IMR-90 (cell line): ENCODE measurements at regions of chr10 and their contacts with region 1.

Region 1: DNA sequence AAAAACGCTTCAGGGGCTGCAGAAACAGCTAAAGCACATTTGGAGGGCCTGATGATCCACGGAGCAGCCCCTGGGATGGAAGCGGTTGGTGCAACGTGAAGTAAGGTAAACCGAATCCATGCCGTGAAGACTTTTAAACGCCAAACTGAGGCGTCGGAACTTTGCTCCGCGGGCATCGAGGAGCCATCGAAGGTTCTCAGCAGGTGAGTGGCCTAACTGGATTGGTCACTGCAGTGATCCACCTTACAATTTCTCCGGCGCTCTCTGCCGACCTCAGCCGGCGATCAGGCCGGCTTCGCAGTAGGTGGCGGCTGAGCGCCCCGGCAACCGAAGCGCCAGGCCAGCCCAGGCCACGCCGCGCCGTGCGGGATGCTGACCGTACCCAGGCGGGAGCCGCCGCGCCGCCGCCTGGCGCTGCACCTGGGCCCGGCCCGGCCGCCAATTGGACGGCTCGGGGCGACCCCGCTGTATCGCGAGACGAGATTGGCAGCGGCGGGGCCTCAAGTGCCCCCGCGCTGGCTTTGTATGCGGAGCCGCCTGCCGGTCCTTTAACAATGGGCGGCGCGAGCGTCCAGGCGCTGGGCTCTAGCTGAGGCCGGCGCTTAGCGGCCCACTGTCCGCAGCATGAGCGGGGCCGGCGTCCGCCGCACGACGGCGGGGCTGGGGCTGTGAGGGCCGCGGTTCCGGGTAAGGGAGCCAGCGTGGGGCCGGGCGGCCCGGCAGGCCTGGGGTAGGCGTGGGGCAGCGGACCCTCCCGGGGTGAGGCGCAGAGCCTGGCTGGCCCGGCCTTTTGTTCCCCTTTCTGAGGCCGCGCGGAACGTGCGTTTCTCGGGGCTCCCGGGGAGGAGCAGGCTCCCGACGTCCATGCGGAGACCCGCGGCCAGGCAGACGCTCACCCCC is at the start of gene CCNJ:
- DNase-seq: peak; percentile 87
- ATAC-seq: peak; percentile 92
- H3K4me3 ChIP-seq: peak within 1 kb of the TSS; percentile 87
- H3K27ac ChIP-seq: peak within 1 kb of the TSS; percentile 86
- H3K4me1 ChIP-seq: no peaks in the 10 kb centered on the region; the same call in 1 of the 2 replicates
- H3K27me3 ChIP-seq: no peaks in the 10 kb centered on the region
- CTCF ChIP-seq: 0 out of 2 replicates have a peak, but pooled peaks have one; percentile 11
- POLR2A ChIP-seq: peak; percentile 89
- RAD21 ChIP-seq: no peak
- total RNA-seq, gene CCNJ: 10.0 and 10.3 TPM in 2 replicates

Region 2: DNA sequence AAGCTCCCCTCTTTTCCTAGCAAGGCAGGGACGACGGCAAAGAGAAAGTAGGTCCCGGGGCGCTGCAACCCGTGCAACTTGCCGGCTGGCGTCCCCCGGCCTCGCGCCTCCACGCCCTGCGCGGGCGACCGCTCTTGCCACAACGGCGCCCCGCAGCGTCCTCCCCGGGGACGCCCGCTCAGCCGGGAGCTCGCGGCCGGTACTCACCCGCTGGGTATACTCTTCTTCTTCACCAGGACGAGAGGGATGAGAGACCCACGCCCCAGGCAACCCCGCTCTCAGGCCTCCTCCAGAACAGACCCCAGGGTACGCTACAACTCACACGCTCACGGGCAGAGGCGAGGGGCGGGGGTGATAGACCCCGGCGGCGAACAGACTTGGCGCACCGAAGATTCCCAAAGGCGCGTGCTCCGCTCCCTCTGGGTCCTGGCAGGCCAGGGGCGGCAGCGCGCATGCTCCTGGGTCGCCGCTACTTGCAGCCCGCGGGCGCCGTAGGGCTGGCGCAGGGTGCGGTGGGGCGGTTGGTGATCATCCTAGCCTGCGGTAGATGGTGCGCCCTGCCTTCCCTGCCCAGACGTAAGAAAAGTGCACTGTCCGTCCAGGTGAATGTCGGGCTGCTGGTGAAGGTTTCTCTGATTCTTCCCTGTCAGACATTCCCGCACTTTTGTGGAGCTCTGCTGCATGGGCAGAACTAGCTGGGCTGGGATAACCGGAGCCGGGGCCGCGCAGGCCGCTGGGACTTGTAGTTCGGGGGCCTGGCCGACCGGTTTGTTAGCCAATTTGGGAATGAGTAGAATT is 135.6 kb before region 1 on chr10 and contains the start of gene CC2D2B:
- CTCF ChIA-PET with region 1: interaction called, 4 read pairs
- POLR2A ChIA-PET with region 1: no interaction called
- dilution Hi-C with region 1: no loop called
- in situ Hi-C with region 1: no loop called
- intact Hi-C with region 1: loop called (anchors 1 kb)
- DNase-seq: peak; percentile 74
- ATAC-seq: peak; percentile 96
- H3K4me3 ChIP-seq: peak within 1 kb of the TSS; percentile 85
- H3K27ac ChIP-seq: peak within 1 kb of the TSS; percentile 79
- H3K4me1 ChIP-seq: no peaks in the 10 kb centered on the region
- H3K27me3 ChIP-seq: no peaks in the 10 kb centered on the region
- CTCF ChIP-seq: peak; percentile 23; the same call in 1 of the 2 replicates
- POLR2A ChIP-seq: no peak
- RAD21 ChIP-seq: no peak
- total RNA-seq, gene CC2D2B: not detected in 2 replicates

Region 3: DNA sequence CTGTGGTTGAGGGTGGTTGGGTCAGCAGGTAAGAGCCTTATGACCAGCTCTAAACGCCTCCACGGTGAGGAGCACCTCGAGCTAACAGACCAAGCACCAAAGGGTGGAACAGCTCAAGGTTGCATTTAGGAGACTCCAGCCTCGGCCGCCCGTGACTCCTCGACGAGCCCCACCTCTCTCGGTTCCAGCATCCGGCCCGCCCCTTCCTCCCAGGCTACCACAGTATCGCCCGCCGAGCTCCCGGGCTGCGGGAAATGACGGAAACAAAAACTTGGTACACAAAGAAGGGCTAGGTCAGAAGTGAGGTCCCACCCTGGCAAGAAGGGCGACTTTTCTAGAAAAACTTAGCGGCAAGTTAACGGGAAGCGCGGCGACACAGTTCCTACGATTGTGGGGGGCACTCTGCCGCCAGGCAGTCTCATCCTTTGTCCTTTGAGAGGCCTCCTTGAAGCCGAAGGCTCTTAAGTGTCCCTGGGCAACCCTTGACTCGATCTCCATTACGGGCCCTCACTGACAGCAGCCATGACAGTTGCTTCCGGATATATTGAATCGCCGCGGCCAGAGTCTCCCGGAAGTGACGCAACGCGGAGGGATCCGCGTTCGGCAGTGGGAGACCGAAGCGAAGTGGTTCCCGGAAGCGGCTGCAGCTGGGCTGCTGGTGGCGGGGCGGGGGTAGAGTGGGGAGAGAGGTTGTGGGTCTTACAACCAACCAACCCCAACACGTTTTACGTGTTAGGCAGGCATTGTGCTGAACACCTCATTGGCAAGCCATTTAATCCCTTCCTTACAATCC is 46.6 kb after region 1 on chr10:
- CTCF ChIA-PET with region 1: no interaction called
- POLR2A ChIA-PET with region 1: no interaction called
- dilution Hi-C with region 1: no loop called
- in situ Hi-C with region 1: no loop called
- intact Hi-C with region 1: loop called (anchors 2 kb)
- DNase-seq: peak; percentile 96
- ATAC-seq: peak; percentile 98
- H3K4me3 ChIP-seq: peak overlapping the region; percentile 80
- H3K27ac ChIP-seq: peak overlapping the region; percentile 82
- H3K4me1 ChIP-seq: peaks cover 3% of the 10 kb centered on the region
- H3K27me3 ChIP-seq: no peaks in the 10 kb centered on the region; the same call in 1 of the 2 replicates
- CTCF ChIP-seq: no peak
- POLR2A ChIP-seq: peak; percentile 79
- RAD21 ChIP-seq: no peak; the same call in 1 of the 2 replicates

Region 4: DNA sequence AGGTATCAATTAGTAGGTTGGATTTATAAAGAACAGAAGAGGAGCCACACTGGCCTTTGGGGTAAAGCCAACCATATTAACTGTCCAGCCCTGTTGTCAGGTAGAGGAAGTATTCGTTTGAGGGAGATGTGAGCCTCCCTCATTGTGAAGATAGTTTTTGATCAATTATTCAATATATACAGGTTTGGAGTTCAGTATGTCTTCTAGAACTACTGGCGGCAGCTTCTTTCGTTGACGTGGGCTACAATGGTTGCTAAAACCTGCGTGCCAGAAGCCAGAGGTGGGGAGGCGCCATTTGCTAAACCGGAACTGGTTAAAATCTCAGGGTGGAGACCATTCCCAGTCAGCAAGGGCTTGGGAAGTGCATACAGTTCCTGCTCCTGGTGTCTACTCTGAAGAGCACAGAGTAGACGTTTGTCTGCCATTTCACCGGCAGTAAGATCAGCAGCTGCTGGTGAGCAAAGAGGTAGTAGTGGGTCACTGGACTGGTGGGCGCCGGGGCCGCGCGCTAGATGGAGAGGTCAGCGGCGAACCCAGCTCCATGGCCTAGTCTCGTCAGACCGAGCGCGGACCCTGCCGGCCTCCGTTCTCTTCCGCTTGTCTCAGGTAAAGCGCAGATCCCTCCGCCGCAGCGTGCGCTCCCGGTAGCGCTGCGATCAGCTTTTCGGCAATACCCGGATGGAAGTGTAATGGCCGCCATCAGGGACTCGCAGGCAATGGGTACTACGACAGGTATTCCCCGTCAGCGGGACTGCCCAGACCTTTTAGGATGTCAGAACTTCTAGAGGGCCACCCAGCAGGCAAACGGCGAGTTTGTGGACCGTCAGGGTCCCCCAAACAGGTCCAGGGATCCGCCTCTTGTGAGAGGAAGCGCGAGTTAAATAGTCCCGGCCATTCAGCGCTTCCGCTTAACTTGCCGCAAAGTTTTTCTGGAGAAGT is 86.4 kb after region 1 on chr10 and contains the start of gene ZNF518A:
- CTCF ChIA-PET with region 1: no interaction called
- POLR2A ChIA-PET with region 1: no interaction called
- dilution Hi-C with region 1: no loop called
- in situ Hi-C with region 1: loop called (anchors 5 kb)
- intact Hi-C with region 1: loop called (anchors 1 kb)
- DNase-seq: peak; percentile 97
- ATAC-seq: peak; percentile 85
- H3K4me3 ChIP-seq: peak within 1 kb of the TSS; percentile 54
- H3K27ac ChIP-seq: peak within 1 kb of the TSS; percentile 94
- H3K4me1 ChIP-seq: peaks cover under 1% of the 10 kb centered on the region; the same call in 1 of the 2 replicates
- H3K27me3 ChIP-seq: no peaks in the 10 kb centered on the region
- CTCF ChIP-seq: no peak
- POLR2A ChIP-seq: 0 out of 2 replicates have a peak, but pooled peaks have one; percentile 17
- RAD21 ChIP-seq: no peak
- total RNA-seq, gene ZNF518A: 7.9 and 10.0 TPM in 2 replicates